ENCODE measurements at regions of chr6 and their contacts with region 1.

Region 1: DNA sequence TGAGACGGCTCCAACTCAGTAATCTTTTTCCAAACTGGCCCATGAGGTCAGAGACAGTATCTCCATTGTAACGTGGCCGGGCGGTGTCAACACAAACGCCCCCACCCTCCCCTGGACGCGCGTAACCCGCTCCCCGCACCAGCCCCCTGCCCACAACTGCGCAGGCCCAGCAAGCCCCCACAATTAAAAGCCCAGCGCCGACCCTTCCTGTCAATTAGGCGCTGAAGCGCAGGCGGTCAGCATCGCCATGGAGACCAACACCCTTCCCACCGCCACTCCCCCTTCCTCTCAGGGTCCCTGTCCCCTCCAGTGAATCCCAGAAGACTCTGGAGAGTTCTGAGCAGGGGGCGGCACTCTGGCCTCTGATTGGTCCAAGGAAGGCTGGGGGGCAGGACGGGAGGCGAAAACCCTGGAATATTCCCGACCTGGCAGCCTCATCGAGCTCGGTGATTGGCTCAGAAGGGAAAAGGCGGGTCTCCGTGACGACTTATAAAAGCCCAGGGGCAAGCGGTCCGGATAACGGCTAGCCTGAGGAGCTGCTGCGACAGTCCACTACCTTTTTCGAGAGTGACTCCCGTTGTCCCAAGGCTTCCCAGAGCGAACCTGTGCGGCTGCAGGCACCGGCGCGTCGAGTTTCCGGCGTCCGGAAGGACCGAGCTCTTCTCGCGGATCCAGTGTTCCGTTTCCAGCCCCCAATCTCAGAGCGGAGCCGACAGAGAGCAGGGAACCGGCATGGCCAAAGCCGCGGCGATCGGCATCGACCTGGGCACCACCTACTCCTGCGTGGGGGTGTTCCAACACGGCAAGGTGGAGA is at the starts of genes HSPA1A and HSPA1L:
- DNase-seq: peak; percentile 93
- H3K4me3 Mint-ChIP-seq: peak within 1 kb of the TSS; percentile 97
- H3K27ac Mint-ChIP-seq: peak within 1 kb of the TSS; percentile 97
- H3K4me1 Mint-ChIP-seq: peaks cover 50% of the 10 kb centered on the region
- H3K27me3 Mint-ChIP-seq: no peaks in the 10 kb centered on the region
- total RNA-seq, gene HSPA1A: 189 and 190 TPM in 2 replicates
- total RNA-seq, gene HSPA1L: 1.8 and 2.5 TPM in 2 replicates

Region 2: DNA sequence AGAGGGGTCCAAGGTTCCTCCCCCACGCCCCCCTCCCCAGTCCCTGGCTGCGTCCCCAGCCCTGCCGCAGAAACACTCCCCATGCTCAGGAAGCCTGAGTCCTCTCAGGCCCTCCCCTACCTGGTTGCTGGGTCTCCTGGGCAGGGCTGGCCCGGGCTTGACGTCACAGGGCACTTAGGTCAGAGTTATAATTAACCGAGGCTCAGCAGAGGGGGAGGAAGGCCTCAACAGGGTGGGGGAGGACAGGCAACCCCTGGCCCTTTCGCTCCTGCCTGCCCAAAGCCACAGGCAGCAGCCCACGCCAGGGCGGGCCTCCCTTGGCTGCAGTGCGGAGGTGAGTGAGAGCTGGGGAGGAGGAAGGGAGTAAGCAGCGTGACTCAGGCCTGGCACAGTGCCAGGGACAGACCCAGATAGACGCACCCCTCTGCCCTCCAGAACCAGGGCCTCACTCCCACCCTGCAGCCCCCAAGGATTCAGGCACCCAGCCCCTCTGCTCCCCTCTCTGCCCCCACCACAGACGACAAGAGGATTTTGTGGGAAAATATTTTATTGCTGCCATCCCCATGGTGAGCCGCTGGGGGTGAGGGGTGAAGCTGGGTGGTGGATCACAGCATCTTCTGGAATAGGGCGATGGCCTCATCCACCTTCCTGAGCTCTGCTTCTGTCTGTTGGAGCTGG is 38.1 kb before region 1 on chr6 and contains the start of gene VWA7:
- intact Hi-C with region 1: loop called (anchors 5 kb)
- DNase-seq: peak; percentile 90
- H3K4me3 Mint-ChIP-seq: peak within 1 kb of the TSS; percentile 66
- H3K27ac Mint-ChIP-seq: peak within 1 kb of the TSS; percentile 89
- H3K4me1 Mint-ChIP-seq: peaks cover 33% of the 10 kb centered on the region
- H3K27me3 Mint-ChIP-seq: no peaks in the 10 kb centered on the region
- total RNA-seq, gene VWA7: 3.0 and 3.2 TPM in 2 replicates

Region 3: GRCh38 chr6:31834434-31835198 is 19.4 kb after region 1 on chr6:
- intact Hi-C with region 1: loop called (anchors 2 kb)
- DNase-seq: peak; percentile 93
- H3K4me3 Mint-ChIP-seq: peak overlapping the region; percentile 97
- H3K27ac Mint-ChIP-seq: peak overlapping the region; percentile 96
- H3K4me1 Mint-ChIP-seq: peaks cover 34% of the 10 kb centered on the region
- H3K27me3 Mint-ChIP-seq: no peaks in the 10 kb centered on the region

Region 4: GRCh38 chr6:31870385-31870921 is 55.2 kb after region 1 on chr6:
- intact Hi-C with region 1: no loop called
- DNase-seq: no peak
- H3K4me3 Mint-ChIP-seq: no peak overlapping the region
- H3K27ac Mint-ChIP-seq: no peak overlapping the region
- H3K4me1 Mint-ChIP-seq: peaks cover 6% of the 10 kb centered on the region
- H3K27me3 Mint-ChIP-seq: peaks cover 2% of the 10 kb centered on the region

Region 5: DNA sequence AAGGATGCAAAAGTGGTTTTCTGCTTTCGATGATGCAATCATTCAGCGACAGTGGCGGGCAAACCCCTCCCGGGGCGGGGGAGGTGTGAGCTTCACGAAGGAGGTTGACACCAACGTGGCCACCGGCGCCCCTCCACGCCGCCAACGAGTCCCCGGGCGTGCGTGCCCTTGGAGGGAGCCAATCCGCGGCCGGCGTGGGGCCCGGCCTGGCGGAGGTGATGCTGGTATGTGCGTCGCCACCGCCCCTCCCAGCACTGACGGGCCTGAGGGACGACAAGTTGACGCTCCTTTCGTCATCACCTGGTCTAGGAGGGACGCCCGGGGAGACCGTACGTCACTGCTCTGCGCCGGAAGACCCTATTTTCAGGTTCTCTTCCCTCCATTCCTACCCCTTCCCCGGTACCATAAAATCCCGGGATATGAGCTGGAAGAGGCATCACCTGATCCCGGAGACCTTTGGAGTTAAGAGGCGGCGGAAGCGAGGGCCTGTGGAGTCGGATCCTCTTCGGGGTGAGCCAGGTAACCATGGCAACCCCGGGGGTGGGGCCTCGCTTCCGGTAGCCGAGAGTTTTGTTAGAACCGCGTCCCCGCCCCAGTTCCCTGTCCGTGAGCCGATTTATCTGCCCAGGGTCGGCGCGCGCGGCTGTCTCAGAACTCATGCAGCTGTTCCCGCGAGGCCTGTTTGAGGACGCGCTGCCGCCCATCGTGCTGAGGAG is 156.9 kb after region 1 on chr6 and contains the start of gene DXO:
- intact Hi-C with region 1: no loop called
- DNase-seq: peak; percentile 99
- H3K4me3 Mint-ChIP-seq: peak within 1 kb of the TSS; percentile 99
- H3K27ac Mint-ChIP-seq: peak within 1 kb of the TSS; percentile 100
- H3K4me1 Mint-ChIP-seq: peaks cover 41% of the 10 kb centered on the region
- H3K27me3 Mint-ChIP-seq: peaks cover 2% of the 10 kb centered on the region
- total RNA-seq, gene DXO: 13.2 and 14.1 TPM in 2 replicates

Measured in activated CD4-positive, alpha-beta T cell treated with anti-CD3 and anti-CD28 coated beads, Interleukin-2, amount 10 ng/mL, durations not matched to agents 24 days and 14 days (primary cell).